GM12878 (cell line): ENCODE measurements at regions of chr17 and their contacts with region 1.

Region 1: GRCh38 chr17:2511462-2512369 is at the start of gene METTL16:
- DNase-seq: peak; percentile 96
- ATAC-seq: peak; percentile 100
- H3K4me3 ChIP-seq: peak within 1 kb of the TSS; percentile 91
- H3K27ac ChIP-seq: peak within 1 kb of the TSS; percentile 94
- H3K4me1 ChIP-seq: peaks cover 11% of the 10 kb centered on the region; the same call in 1 of the 2 replicates
- H3K27me3 ChIP-seq: no peaks in the 10 kb centered on the region
- CTCF ChIP-seq: no peak
- EP300 ChIP-seq: no peak
- POLR2A ChIP-seq: peak; percentile 86
- RAD21 ChIP-seq: no peak
- polyA plus RNA-seq, gene METTL16: 15.6 to 22.9 TPM

Region 2: DNA sequence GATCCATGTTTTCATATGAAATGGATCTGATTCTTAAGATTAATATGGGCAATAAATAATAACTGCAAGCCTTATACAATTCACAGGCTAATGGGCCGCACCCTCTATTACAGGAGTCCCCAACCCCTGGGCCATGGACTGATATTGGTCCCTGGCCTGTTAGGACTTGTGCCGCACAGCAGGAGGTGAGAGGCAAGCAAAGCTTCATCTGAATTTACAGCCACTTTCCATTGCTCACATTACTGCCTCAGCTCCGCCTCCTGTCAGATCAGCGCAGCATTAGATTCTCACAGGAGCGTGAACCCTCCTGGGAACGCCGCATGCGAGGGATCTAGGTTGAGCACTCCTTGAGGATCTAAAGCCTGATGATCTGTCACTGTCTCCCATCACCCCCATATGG is 26.8 kb before region 1 on chr17:
- CTCF ChIA-PET with region 1: interaction called, 5 read pairs
- POLR2A ChIA-PET with region 1: interaction called, 10 read pairs
- RAD21 ChIA-PET with region 1: interaction called, 28 read pairs
- SMC1A ChIA-PET with region 1: interaction called, 11 read pairs
- in situ Hi-C with region 1: no loop called
- intact Hi-C with region 1: loop called (anchors 2 kb)
- DNase-seq: no peak
- ATAC-seq: no peak
- H3K4me3 ChIP-seq: no peak overlapping the region
- H3K27ac ChIP-seq: no peak overlapping the region
- H3K4me1 ChIP-seq: peaks cover 7% of the 10 kb centered on the region
- H3K27me3 ChIP-seq: no peaks in the 10 kb centered on the region
- CTCF ChIP-seq: no peak
- EP300 ChIP-seq: no peak
- POLR2A ChIP-seq: no peak
- RAD21 ChIP-seq: no peak

Region 3: GRCh38 chr17:2571523-2572303 is 60.0 kb after region 1 on chr17:
- CTCF ChIA-PET with region 1: no interaction called
- POLR2A ChIA-PET with region 1: no interaction called
- RAD21 ChIA-PET with region 1: no interaction called
- SMC1A ChIA-PET with region 1: interaction called, 5 read pairs
- in situ Hi-C with region 1: no loop called
- intact Hi-C with region 1: loop called (anchors 2 kb)
- DNase-seq: peak; percentile 61
- ATAC-seq: peak; percentile 98
- H3K4me3 ChIP-seq: peak overlapping the region; percentile 35
- H3K27ac ChIP-seq: peak overlapping the region; percentile 43
- H3K4me1 ChIP-seq: peaks cover 5% of the 10 kb centered on the region
- H3K27me3 ChIP-seq: no peaks in the 10 kb centered on the region
- CTCF ChIP-seq: no peak
- EP300 ChIP-seq: no peak
- POLR2A ChIP-seq: no peak
- RAD21 ChIP-seq: no peak

Region 4: DNA sequence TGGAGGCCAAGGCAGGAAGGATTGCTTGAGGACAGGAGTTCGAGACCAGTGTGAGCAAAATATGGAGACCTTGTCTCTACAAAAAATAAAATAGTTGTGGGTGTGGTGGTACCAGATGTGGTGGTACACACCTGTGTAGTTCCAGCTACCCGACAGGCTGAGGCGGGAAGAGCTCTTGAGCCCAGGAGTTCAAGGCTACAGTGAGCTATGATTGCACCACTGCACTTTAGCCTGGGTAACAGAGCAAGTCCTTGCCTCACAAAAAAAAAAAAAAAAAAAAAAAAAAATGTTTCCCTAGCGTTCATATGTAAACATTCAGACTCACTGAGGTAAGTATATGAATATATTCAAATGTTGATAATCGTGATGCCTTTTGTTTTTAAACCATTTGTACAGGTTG is 160.3 kb after region 1 on chr17:
- CTCF ChIA-PET with region 1: interaction called, 3 read pairs
- POLR2A ChIA-PET with region 1: no interaction called
- RAD21 ChIA-PET with region 1: no interaction called
- SMC1A ChIA-PET with region 1: no interaction called
- in situ Hi-C with region 1: no loop called
- intact Hi-C with region 1: loop called (anchors 5 kb)
- DNase-seq: no peak
- ATAC-seq: no peak
- H3K4me3 ChIP-seq: no peak overlapping the region
- H3K27ac ChIP-seq: no peak overlapping the region
- H3K4me1 ChIP-seq: no peaks in the 10 kb centered on the region
- H3K27me3 ChIP-seq: no peaks in the 10 kb centered on the region
- CTCF ChIP-seq: no peak
- EP300 ChIP-seq: no peak
- POLR2A ChIP-seq: no peak
- RAD21 ChIP-seq: no peak